ENCODE measurements at regions of chr12 and their contacts with region 1.

Region 1: GRCh38 chr12:6026998-6027397 is 81.9 kb upstream of the ANO2 start:
- DNase-seq: no peak
- H3K4me3 Mint-ChIP-seq: no peak overlapping the region
- H3K27ac Mint-ChIP-seq: no peak overlapping the region
- H3K4me1 Mint-ChIP-seq: no peaks in the 10 kb centered on the region
- H3K27me3 Mint-ChIP-seq: peaks cover 14% of the 10 kb centered on the region

Region 2: DNA sequence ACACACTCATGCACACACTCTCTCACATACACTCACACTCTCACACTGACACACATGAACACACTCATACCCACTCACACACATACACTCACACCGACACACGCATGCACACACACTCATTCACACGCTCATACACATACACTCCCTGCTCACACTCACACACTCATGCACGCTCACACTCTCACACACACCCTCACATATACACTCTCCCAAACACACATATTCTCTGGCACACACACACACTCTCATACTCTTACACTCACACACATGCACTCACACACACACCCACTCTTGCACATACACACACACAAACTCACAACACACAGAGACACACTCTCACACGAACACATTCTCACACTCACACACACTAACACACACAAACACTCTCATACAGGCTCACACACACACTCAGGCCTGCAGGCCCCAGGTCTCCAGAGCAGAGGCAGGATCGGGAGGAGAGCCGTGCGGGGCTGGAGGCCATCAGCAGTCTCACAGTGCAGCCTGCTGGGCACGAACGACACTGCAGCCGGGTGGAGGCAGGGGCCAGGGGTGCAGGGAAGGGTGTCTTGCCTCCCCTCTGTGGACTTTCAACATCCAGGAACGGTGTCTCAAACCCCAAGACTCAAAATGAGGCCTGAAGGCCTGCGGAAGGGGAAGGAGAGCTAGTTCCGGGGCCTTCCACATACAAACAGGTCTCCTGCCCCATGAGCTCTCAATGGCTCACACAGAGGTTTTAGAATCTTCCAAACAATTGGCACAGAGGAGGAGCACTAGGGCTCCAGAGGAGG is 230.6 kb before region 1 on chr12:
- CTCF ChIA-PET with region 1: no interaction called
- POLR2A ChIA-PET with region 1: no interaction called
- DNase-seq: no peak
- H3K4me3 Mint-ChIP-seq: no peak overlapping the region
- H3K27ac Mint-ChIP-seq: no peak overlapping the region
- H3K4me1 Mint-ChIP-seq: no peaks in the 10 kb centered on the region
- H3K27me3 Mint-ChIP-seq: peaks cover 1% of the 10 kb centered on the region

Region 3: DNA sequence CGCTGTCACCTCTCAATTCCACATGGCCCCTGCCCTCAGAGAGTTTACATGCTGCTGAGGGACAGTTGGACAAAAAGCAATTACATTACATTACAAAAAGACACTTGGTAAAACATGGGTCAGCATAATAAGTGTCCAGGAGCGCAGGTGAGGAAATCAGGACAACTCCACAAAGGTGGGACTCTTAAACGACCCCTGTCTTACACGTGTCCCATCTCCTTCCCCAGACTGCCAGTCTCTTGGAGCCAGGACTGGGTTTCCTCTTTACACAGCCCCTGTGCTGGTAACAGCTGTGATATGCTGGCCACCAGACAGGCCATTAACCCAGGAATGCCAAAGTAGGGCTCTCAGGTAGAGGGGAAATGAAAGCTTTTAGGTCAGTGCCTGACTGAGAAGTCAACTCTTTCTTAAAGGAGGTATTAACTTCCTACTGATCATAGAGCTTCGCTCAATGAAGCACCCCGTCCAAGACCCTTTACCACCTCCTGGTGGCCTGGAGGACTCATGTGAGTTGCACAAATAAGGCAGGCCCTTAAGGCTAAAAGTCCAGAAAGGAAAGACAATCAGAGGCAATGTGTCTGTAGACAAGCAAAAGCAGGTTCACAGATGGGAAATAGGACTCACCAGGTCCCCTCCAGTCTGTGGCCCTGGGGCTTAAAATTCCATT is 137.5 kb before region 1 on chr12:
- CTCF ChIA-PET with region 1: no interaction called
- POLR2A ChIA-PET with region 1: no interaction called
- DNase-seq: no peak
- H3K4me3 Mint-ChIP-seq: no peak overlapping the region
- H3K27ac Mint-ChIP-seq: no peak overlapping the region
- H3K4me1 Mint-ChIP-seq: peaks cover 4% of the 10 kb centered on the region
- H3K27me3 Mint-ChIP-seq: peaks cover 20% of the 10 kb centered on the region

Region 4: GRCh38 chr12:6039894-6040568 is 13.0 kb after region 1 on chr12:
- CTCF ChIA-PET with region 1: interaction called, 10 read pairs
- POLR2A ChIA-PET with region 1: no interaction called
- DNase-seq: peak; percentile 52
- H3K4me3 Mint-ChIP-seq: no peak overlapping the region
- H3K27ac Mint-ChIP-seq: no peak overlapping the region
- H3K4me1 Mint-ChIP-seq: no peaks in the 10 kb centered on the region
- H3K27me3 Mint-ChIP-seq: peaks cover 4% of the 10 kb centered on the region